HAP-1 (cell line): ENCODE measurements at regions of chr3 and their contacts with region 1.

Region 1: DNA sequence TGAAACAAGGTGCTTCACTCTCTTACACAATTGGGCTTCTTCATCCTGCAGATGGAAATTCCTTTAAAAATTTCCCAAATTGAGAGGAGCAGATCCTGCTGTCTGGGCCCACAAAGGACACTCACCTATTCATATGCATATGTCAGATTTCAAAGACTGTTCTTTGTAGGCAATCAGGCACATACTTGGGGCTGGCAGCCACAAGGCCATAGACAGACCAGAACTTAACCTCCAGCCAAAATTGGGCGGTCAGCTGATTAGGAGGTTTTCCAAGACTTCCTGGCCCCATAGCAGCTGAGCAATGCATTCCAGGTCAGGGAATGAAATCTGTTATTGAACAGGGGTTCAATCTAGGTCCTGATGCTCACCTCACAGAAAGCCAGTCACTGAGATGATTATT is 15.0 kb upstream of the HPS3 start:
- DNase-seq: peak; percentile 51 to 57
- H3K4me3 ChIP-seq: no peak overlapping the region
- H3K4me1 ChIP-seq: peaks cover 9% of the 10 kb centered on the region; the same call in 1 of the 2 replicates
- H3K27me3 ChIP-seq: no peaks in the 10 kb centered on the region

Region 2: DNA sequence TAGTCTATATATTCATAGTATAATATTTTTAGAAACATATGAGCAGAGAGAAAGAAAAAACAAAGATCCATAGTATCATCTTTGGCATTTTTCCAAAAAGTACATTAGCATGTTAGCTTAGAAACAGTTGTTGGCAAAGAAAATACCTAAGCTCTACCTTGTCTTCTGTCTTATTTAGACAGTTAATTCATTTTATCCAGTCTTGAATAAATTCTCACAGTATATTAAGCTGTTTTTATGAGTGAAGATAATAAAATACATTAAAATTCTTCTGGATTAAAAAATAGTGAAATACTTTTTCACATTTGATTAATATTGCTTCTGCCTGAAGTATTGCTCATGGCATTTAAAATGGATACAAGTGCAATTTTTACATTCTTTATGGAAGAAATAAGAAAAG is 1560.1 kb before region 1 on chr3:
- in situ Hi-C with region 1: no loop called
- DNase-seq: no peak
- H3K4me3 ChIP-seq: no peak overlapping the region
- H3K4me1 ChIP-seq: no peaks in the 10 kb centered on the region
- H3K27me3 ChIP-seq: no peaks in the 10 kb centered on the region

Region 3: DNA sequence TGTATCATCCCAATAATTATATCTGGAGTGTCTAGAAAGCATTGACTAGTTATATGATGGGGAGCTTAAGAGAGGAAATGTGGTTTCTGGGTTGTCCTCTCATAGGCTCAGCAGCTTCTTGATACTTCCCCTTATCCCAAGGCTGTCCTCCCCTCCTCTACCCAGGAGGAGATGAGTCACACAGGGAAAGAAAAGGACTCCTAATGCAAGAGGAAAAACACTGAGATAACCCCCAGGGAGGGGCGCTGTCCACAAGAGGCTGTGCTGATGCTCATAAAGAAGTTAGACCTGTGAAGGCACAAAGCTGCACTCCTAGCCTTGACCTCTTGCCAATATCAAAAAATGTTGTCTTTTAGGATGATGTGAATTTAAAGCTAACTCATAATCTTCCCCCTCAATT is 151.9 kb before region 1 on chr3:
- in situ Hi-C with region 1: loop called (anchors 10 kb)
- DNase-seq: peak in 1 of 2 experiments; percentile 62
- H3K4me3 ChIP-seq: no peak overlapping the region
- H3K4me1 ChIP-seq: peaks cover 21% of the 10 kb centered on the region
- H3K27me3 ChIP-seq: no peaks in the 10 kb centered on the region

Region 4: DNA sequence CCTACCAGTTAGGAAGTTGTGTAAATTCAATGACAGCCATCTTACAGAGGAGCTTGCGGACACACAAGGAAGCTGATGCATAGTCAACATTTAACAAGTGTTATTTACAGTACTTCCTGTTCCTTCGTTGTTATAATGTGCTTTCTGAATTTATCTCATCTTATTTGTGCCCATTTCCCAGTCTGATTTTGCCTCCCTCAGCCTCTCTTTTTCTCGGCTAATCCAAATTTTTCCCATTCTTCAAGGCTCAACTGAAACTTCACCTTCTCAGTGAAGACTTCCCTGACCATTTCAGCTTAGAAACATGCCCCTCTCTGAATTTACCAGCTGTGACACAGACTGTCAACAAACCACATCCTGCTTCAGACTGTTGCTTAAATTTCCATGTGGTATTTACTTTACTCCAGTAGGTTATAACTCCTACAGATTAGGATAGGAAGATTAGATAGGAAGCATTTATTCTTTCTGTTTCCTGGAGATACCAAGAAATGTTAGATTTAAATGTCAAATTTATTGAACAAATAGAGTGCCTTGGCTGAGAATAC is 162.9 kb after region 1 on chr3:
- in situ Hi-C with region 1: loop called (anchors 5 kb)
- DNase-seq: no peak
- H3K4me3 ChIP-seq: no peak overlapping the region
- H3K4me1 ChIP-seq: no peaks in the 10 kb centered on the region
- H3K27me3 ChIP-seq: no peaks in the 10 kb centered on the region